ENCODE measurements at regions of chr12 and their contacts with region 1.

Region 1: GRCh38 chr12:69470189-69471075 is at the start of gene FRS2:
- DNase-seq: peak; percentile 97
- total RNA-seq, gene FRS2: 22.6 TPM

Region 2: DNA sequence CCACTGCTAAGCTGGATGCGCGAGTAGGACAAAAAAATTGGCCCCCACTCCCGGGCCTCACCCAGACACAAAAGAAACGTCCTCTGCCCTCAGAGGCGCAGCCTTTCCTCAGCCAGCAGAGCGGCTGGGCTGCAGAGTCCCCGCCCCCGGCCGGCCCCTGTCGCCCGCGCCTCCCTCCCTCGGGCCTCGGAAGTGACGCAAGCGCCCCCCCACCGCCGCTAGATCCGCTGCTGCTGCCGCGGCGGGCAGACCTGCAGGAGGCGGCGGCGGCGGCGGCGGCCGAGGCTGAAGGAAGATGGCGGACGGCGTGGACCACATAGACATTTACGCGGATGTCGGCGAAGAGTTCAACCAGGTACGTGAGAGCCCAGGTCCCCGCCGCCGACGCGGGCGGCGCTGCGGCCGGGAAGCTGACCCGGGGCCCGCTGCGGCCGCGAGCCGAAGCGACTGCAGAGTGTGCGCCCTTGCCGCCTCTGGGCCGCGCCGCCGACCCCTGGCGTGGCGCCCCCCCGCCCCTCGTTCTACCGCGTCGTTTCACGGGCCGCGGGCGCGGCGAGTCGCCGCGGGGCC is 231.0 kb before region 1 on chr12 and contains the start of gene CPSF6:
- intact Hi-C with region 1: loop called (anchors 5 kb)
- DNase-seq: peak; percentile 99
- total RNA-seq, gene CPSF6: 35.4 TPM

Region 3: GRCh38 chr12:69359531-69360347 is 110.7 kb before region 1 on chr12 and contains the start of gene YEATS4:
- intact Hi-C with region 1: loop called (anchors 2 kb)
- DNase-seq: peak; percentile 91
- total RNA-seq, gene YEATS4: 14.6 TPM

Region 4: GRCh38 chr12:69585189-69586062 is 115.0 kb after region 1 on chr12 and contains the start of gene CCT2:
- intact Hi-C with region 1: no loop called
- DNase-seq: peak; percentile 99
- total RNA-seq, gene CCT2: 86.1 TPM

Region 5: DNA sequence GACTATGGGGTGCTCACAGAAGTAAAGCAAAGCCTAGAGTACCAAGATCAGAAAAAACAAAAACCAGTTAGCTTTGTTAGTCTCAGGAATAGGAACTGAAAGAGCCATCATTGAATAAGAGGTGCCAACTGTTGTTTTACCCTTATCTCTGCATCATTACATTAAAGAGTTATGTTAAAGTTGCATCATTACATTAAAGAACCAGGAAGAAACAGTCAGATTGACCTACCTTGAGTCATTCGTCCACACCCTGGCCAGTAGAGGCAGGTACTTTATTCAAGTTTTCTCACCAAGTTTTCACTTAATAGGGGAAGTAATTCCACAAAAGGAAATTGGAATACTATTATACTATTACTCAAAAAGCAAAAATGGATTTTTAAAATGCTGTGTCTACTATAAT is 651.1 kb after region 1 on chr12:
- intact Hi-C with region 1: no loop called
- DNase-seq: no peak

Measured in cardiac septum (tissue), 1 donor.